Sigmoid colon (tissue), 7 donors: ENCODE measurements at regions of chr16 and their contacts with region 1.

Region 1: GRCh38 chr16:30893744-30894539 is at the start of gene BCL7C:
- DNase-seq: peak; percentile 95
- H3K4me3 ChIP-seq: peak within 1 kb of the TSS; percentile 74 to 94 (median 86)
- H3K27ac ChIP-seq: peak within 1 kb of the TSS; percentile 95 to 99 (median 98)
- H3K4me1 ChIP-seq: peaks cover 0 to 48% (median 39%) of the 10 kb centered on the region in 4 donors
- H3K27me3 ChIP-seq: no peaks in the 10 kb centered on the region
- CTCF ChIP-seq: peak in 3 of 4 experiments; percentile 7 to 30 (median 15)
- EP300 ChIP-seq: no peak
- POLR2A ChIP-seq: no peak
- total RNA-seq, gene BCL7C: 45.7 to 63.1 (median 55.2) TPM

Region 2: GRCh38 chr16:30761928-30762810 is 131.8 kb before region 1 on chr16 and contains the starts of genes CFAP119 and RNF40:
- intact Hi-C with region 1: loop called (anchors 5 kb)
- DNase-seq: peak; percentile 99
- H3K4me3 ChIP-seq: peak within 1 kb of the TSS; percentile 75 to 95 (median 84)
- H3K27ac ChIP-seq: peak within 1 kb of the TSS; percentile 89 to 96 (median 92)
- H3K4me1 ChIP-seq: peaks cover 0 to 33% (median 31%) of the 10 kb centered on the region in 4 donors
- H3K27me3 ChIP-seq: no peaks in the 10 kb centered on the region
- CTCF ChIP-seq: no peak
- EP300 ChIP-seq: peak in 1 of 4 donors; percentile 31
- POLR2A ChIP-seq: peak; percentile 90 to 91
- total RNA-seq, gene CFAP119: 0.82 to 2.8 (median 1.7) TPM
- total RNA-seq, gene RNF40: 48.1 to 53.9 (median 49.6) TPM

Region 3: DNA sequence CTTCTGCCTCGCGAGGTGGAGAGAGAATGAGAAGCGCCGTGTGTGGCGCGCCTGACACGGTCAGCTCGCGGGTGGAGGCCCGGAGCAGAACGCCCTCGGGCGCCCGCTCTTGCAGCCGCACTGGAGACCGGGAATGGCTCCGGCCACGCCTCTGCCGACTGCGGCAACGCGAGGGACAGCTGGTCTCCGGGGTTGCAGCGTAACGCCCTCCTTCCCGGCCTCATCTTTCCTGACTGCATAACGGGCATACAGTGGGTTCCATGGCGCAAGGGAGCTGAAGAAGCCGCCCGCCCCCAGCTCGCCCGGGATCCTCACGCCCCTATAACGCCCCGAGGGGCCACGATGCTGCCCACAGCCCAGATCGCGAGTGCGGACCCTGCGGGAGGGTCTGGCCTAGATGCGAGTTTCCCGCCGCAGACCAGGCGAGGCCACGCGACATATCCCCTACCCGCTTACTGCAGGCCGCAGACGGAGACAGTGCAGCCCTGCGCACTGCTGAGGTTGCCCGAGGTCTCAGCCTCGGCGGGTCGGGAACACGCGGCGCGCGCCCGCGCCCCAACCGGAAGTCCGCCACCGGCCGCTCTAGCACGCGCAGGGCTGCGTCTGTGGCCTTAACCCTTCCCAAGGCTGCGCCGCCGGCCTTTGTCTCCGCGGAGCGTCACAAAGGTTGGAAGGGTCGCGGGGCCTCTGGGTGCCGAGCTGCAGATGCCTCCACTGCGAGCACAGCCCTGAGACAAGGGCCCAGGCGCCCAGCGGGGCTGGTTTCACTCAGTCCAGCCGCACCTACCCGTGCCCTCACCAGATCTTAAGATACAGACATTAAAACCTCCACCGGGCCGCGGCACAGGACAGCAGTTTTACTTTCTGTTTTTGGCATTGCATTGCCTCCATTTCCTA is 18.9 kb before region 1 on chr16:
- intact Hi-C with region 1: loop called (anchors 2 kb)
- DNase-seq: peak; percentile 94
- H3K4me3 ChIP-seq: peak overlapping the region; percentile 84 to 94 (median 90)
- H3K27ac ChIP-seq: peak overlapping the region; percentile 94
- H3K4me1 ChIP-seq: peaks cover 0 to 30% (median 24%) of the 10 kb centered on the region in 4 donors
- H3K27me3 ChIP-seq: no peaks in the 10 kb centered on the region
- CTCF ChIP-seq: no peak
- EP300 ChIP-seq: no peak
- POLR2A ChIP-seq: peak; percentile 77 to 80

Region 4: DNA sequence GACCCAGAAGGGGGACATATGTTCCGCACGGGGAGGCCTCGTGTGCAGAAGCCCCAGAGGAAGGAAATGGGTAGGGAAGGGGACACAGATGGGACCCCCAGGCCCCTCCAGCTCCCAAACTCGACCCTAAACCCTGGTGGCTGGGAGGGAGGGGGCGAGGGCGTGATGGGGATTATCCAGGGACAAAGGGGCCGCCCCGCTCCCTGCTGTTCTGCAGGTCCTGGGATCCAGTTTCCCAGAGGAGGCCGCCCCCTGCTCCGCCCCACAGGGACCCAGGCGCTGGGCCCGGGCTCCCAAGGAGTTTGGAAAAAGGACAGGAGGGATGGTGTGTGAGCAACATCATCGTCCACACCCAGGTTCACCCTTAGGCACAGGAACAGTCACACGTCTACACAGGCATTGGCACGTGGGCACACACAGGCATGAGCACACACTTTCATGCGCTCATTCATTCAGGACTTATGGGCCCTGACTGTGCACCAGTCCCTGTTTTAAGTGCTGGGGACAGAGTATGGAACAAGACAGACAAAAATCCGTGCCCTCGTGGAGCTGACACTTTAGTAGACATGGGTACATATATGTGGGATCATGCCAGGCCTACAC is 16.6 kb after region 1 on chr16:
- intact Hi-C with region 1: no loop called
- DNase-seq: no peak
- H3K4me3 ChIP-seq: no peak overlapping the region
- H3K27ac ChIP-seq: no peak overlapping the region
- H3K4me1 ChIP-seq: no peaks in the 10 kb centered on the region
- H3K27me3 ChIP-seq: no peaks in the 10 kb centered on the region
- CTCF ChIP-seq: no peak
- EP300 ChIP-seq: no peak
- POLR2A ChIP-seq: no peak